ENCODE measurements at regions of chr17 and their contacts with region 1.

Region 1: GRCh38 chr17:45834471-45835396 is 9.9 kb upstream of the SPPL2C start:
- DNase-seq: no peak
- H3K4me3 ChIP-seq: no peak overlapping the region
- H3K27ac ChIP-seq: no peak overlapping the region
- H3K4me1 ChIP-seq: peaks cover 0 to 5% (median 0%) of the 10 kb centered on the region in 6 donors
- H3K27me3 ChIP-seq: peaks cover 0 to 48% (median 0%) of the 10 kb centered on the region in 7 donors
- CTCF ChIP-seq: no peak
- POLR2A ChIP-seq: no peak

Region 2: GRCh38 chr17:45640141-45640850 is 194.4 kb before region 1 on chr17:
- intact Hi-C with region 1: loop called (anchors 5 kb)
- DNase-seq: peak; percentile 85
- H3K4me3 ChIP-seq: no peak overlapping the region
- H3K27ac ChIP-seq: no peak overlapping the region
- H3K4me1 ChIP-seq: peaks cover 0 to 11% (median 5%) of the 10 kb centered on the region in 6 donors
- H3K27me3 ChIP-seq: peaks cover 0 to 2% (median 0%) of the 10 kb centered on the region in 7 donors
- CTCF ChIP-seq: peak; percentile 80 to 93 (median 87)
- POLR2A ChIP-seq: no peak